ENCODE measurements at regions of chr1 and their contacts with region 1.

Region 1: GRCh38 chr1:234722904-234723720 is 113.1 kb upstream of the IRF2BP2 start:
- DNase-seq: peak; percentile 88
- ATAC-seq: peak; percentile 68
- H3K4me3 ChIP-seq: no peak overlapping the region
- H3K27ac ChIP-seq: peak overlapping the region; percentile 97 to 100
- H3K4me1 ChIP-seq: peaks cover 4 to 9% of the 10 kb centered on the region in 2 donors
- H3K27me3 ChIP-seq: no peaks in the 10 kb centered on the region

Region 2: GRCh38 chr1:234533975-234534876 is 188.9 kb before region 1 on chr1:
- intact Hi-C with region 1: loop called (anchors 2 to 10 kb)
- DNase-seq: peak; percentile 94 to 97
- ATAC-seq: peak; percentile 21
- H3K4me3 ChIP-seq: no peak overlapping the region
- H3K27ac ChIP-seq: peak overlapping the region; percentile 97 to 99
- H3K4me1 ChIP-seq: peaks cover 3 to 18% of the 10 kb centered on the region in 2 donors
- H3K27me3 ChIP-seq: no peaks in the 10 kb centered on the region

Region 3: GRCh38 chr1:234631721-234632125 is 91.4 kb before region 1 on chr1:
- intact Hi-C with region 1: no loop called
- DNase-seq: no peak
- ATAC-seq: peak; percentile 41
- H3K4me3 ChIP-seq: no peak overlapping the region
- H3K27ac ChIP-seq: no peak overlapping the region
- H3K4me1 ChIP-seq: no peaks in the 10 kb centered on the region
- H3K27me3 ChIP-seq: no peaks in the 10 kb centered on the region

Region 4: DNA sequence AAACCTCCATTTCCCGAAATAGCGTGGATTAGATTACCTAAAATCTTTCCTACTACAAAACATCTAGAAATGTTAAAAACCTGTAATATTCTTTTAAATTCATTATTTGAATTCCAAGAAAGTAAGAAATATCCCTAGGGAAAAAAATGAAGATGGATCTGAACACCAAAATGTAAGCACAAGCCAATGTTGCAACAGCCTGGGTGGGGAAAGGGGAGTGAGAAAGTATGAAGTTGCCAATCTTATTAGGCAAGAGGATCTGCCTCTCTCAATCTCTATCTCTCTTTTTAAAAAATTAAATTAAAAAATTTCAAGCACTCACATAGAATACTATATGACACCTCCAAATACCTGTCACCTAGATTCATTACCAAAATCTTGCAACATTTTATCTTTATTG is 38.3 kb before region 1 on chr1:
- intact Hi-C with region 1: loop called in 1 of 2 experiments (anchors 5 kb)
- DNase-seq: no peak
- ATAC-seq: no peak
- H3K4me3 ChIP-seq: no peak overlapping the region
- H3K27ac ChIP-seq: no peak overlapping the region
- H3K4me1 ChIP-seq: peaks cover 0 to 2% of the 10 kb centered on the region in 2 donors
- H3K27me3 ChIP-seq: no peaks in the 10 kb centered on the region

Region 5: GRCh38 chr1:234755449-234755863 is 32.3 kb after region 1 on chr1:
- intact Hi-C with region 1: no loop called
- DNase-seq: peak; percentile 88
- ATAC-seq: peak; percentile 89
- H3K4me3 ChIP-seq: no peak overlapping the region
- H3K27ac ChIP-seq: no peak overlapping the region
- H3K4me1 ChIP-seq: no peaks in the 10 kb centered on the region
- H3K27me3 ChIP-seq: no peaks in the 10 kb centered on the region

Region 6: GRCh38 chr1:234918181-234918841 is 195.2 kb after region 1 on chr1:
- intact Hi-C with region 1: loop called (anchors 5 to 10 kb)
- DNase-seq: peak; percentile 74 to 80
- ATAC-seq: peak; percentile 74
- H3K4me3 ChIP-seq: no peak overlapping the region
- H3K27ac ChIP-seq: peak overlapping the region; percentile 51 to 97
- H3K4me1 ChIP-seq: peaks cover 2 to 3% of the 10 kb centered on the region in 2 donors
- H3K27me3 ChIP-seq: no peaks in the 10 kb centered on the region

Region 7: GRCh38 chr1:234987415-234988154 is 264.5 kb after region 1 on chr1:
- intact Hi-C with region 1: loop called (anchors 5 kb)
- DNase-seq: peak; percentile 88 to 89
- ATAC-seq: peak; percentile 85
- H3K4me3 ChIP-seq: no peak overlapping the region
- H3K27ac ChIP-seq: peak overlapping the region; percentile 97 to 100
- H3K4me1 ChIP-seq: peaks cover 4 to 5% of the 10 kb centered on the region in 2 donors
- H3K27me3 ChIP-seq: no peaks in the 10 kb centered on the region

Region 8: DNA sequence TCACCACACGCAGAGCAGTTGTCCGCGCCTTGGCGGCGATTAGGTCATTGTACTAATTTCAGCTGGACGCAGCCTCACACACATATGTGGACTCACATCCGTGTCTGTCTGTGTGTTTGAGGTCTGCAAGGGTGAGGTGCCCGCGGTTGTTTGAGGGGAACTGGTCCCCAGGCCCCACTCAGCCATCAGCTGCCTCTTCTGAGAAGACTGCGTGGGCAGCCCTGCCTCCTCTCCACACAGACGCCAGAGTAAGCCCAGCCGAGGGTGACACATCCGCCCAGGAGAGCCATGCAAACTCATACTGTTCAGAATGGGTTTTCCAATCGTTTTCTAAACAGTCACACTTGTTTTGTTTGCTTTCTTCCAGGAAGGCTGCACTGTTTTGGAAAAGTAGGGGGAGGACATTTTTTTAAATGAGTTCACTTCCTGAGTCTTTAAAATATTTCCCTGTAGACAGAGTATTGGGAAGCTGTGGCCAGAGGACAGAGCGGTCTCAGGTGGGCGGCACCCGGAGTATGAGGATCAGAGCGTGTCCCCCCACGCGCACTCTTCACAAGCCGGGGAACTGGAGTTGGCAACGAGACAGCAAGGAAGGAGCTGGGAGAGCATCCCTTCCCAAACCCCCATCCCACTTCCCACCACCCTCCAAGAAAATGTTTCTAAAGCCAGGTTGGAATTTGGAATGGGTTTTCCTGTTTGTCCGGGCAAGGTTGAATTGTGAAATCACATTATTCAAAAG is 352.2 kb after region 1 on chr1:
- intact Hi-C with region 1: loop called (anchors 1 to 5 kb)
- DNase-seq: peak; percentile 88 to 93
- ATAC-seq: peak; percentile 81
- H3K4me3 ChIP-seq: no peak overlapping the region
- H3K27ac ChIP-seq: peak overlapping the region; percentile 58 to 93
- H3K4me1 ChIP-seq: peaks cover 0 to 5% of the 10 kb centered on the region in 2 donors
- H3K27me3 ChIP-seq: no peaks in the 10 kb centered on the region

Measured in aorta (tissue), 5 donors.